ENCODE measurements at regions of chr18 and their contacts with region 1.

Region 1: DNA sequence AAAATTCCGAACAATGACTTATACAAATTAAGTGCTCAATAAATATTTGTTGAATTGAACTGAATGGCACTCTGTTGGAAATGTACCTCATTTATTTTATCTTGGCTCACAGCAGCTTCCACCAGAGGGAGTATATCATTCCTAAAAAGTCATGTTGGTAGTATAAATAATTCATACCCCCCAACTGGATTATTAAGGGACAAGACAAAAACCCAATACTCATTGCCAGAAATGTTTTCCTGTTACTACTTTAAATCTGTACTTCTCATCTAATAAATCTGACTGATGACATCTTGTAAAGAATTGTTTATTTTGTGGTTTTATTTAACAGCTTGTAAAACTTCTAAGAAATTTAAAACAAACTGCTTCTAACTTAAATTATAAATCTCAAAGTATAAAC is 163.9 kb downstream of the CDH2 start:
- DNase-seq: peak; percentile 36
- H3K4me3 ChIP-seq: no peak overlapping the region
- H3K27ac ChIP-seq: no peak overlapping the region
- H3K4me1 ChIP-seq: no peaks in the 10 kb centered on the region
- H3K27me3 ChIP-seq: peaks cover 17% of the 10 kb centered on the region
- CTCF ChIP-seq: peak; percentile 51; the same call in 1 of the 2 replicates

Region 2: DNA sequence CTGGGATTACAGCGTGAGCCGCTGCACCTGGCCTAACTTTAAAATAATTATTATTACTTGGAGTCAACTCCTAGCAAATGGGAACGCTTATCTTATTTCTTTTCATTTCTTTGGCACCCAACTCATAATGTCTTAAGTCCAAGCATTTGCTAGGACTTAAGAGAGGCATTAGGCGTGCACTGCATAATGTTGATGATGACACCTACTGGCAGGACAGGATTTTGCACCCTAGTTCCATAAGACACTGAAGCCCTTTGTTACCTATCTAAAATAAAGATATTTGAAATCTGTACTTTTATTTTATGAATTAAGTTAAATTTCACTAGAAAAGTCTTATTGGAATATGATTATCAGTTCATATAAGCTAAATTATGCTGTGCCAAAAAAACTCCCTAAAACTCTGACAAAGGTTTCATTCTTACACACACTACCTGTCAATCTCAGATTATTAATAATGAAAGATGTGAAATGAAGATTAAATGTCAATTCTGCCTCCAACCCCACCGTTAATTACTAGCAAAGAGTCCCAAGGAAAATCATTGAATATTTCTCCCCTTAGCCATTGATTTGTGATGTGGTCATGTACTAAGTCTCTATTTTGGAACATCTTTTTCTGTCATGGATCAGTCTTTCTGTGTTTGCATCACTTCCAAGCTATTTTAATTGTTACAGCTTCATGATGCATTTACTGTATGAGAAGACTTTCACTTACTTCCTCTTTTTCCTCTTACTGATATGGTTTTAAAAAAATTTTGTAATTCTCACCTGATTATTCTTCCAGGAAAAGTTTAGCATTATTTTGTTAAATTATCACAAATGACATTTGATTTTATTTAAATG is 176.6 kb after region 1 on chr18:
- CTCF ChIA-PET with region 1: no interaction called
- POLR2A ChIA-PET with region 1: no interaction called
- intact Hi-C with region 1: loop called (anchors 10 kb)
- DNase-seq: peak; percentile 65
- H3K4me3 ChIP-seq: no peak overlapping the region
- H3K27ac ChIP-seq: no peak overlapping the region
- H3K4me1 ChIP-seq: no peaks in the 10 kb centered on the region
- H3K27me3 ChIP-seq: peaks cover 9% of the 10 kb centered on the region
- CTCF ChIP-seq: peak; percentile 68